Activated naive CD4-positive, alpha-beta T cell treated with anti-CD3 and anti-CD28 coated beads for 36 hours (primary cell): ENCODE measurements at regions of chr1 and their contacts with region 1.

Region 1: GRCh38 chr1:12472798-12473551 is 145.0 kb downstream of the DHRS3 start:
- DNase-seq: peak; percentile 95
- H3K4me3 Mint-ChIP-seq: peak overlapping the region; percentile 56
- H3K27ac Mint-ChIP-seq: peak overlapping the region; percentile 98
- H3K4me1 Mint-ChIP-seq: peaks cover 89% of the 10 kb centered on the region
- H3K27me3 Mint-ChIP-seq: no peaks in the 10 kb centered on the region

Region 2: DNA sequence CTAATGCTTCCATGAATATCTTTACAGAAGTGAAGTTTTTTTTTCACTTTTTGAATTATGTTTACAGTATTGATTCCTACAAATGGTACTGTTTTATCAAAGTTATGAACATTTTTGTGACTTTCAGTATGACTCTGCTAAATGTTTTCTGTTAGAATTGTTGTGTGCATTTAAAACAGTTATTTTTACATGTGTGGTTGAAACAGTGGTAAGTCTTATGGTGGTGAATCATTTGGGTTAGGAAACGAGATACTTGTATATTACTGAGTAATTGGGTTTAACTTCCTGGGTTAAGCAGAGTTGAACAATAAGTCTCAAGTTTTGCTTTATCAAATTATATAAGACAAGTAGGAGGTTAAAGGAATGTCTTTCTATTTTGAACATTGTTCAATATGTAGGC is 176.4 kb before region 1 on chr1:
- CTCF ChIA-PET with region 1: no interaction called
- intact Hi-C with region 1: loop called (anchors 2 kb)
- DNase-seq: no peak
- H3K4me3 Mint-ChIP-seq: no peak overlapping the region
- H3K27ac Mint-ChIP-seq: peak overlapping the region; percentile 51
- H3K4me1 Mint-ChIP-seq: peaks cover 30% of the 10 kb centered on the region
- H3K27me3 Mint-ChIP-seq: no peaks in the 10 kb centered on the region

Region 3: GRCh38 chr1:12344596-12345349 is 128.2 kb before region 1 on chr1:
- CTCF ChIA-PET with region 1: no interaction called
- intact Hi-C with region 1: loop called (anchors 1 kb)
- DNase-seq: peak; percentile 59
- H3K4me3 Mint-ChIP-seq: peak overlapping the region; percentile 51
- H3K27ac Mint-ChIP-seq: peak overlapping the region; percentile 82
- H3K4me1 Mint-ChIP-seq: peaks cover 61% of the 10 kb centered on the region
- H3K27me3 Mint-ChIP-seq: no peaks in the 10 kb centered on the region

Region 4: GRCh38 chr1:12407050-12407961 is 65.7 kb before region 1 on chr1:
- CTCF ChIA-PET with region 1: no interaction called
- intact Hi-C with region 1: loop called (anchors 2 kb)
- DNase-seq: peak; percentile 46
- H3K4me3 Mint-ChIP-seq: no peak overlapping the region
- H3K27ac Mint-ChIP-seq: no peak overlapping the region
- H3K4me1 Mint-ChIP-seq: peaks cover 38% of the 10 kb centered on the region
- H3K27me3 Mint-ChIP-seq: no peaks in the 10 kb centered on the region

Region 5: GRCh38 chr1:12415038-12415466 is 57.9 kb before region 1 on chr1:
- CTCF ChIA-PET with region 1: no interaction called
- intact Hi-C with region 1: loop called (anchors 2 kb)
- DNase-seq: no peak
- H3K4me3 Mint-ChIP-seq: no peak overlapping the region
- H3K27ac Mint-ChIP-seq: peak overlapping the region; percentile 26
- H3K4me1 Mint-ChIP-seq: peaks cover 35% of the 10 kb centered on the region
- H3K27me3 Mint-ChIP-seq: no peaks in the 10 kb centered on the region

Region 6: GRCh38 chr1:12511516-12512468 is 38.8 kb after region 1 on chr1:
- CTCF ChIA-PET with region 1: interaction called, 6 read pairs
- intact Hi-C with region 1: loop called (anchors 1 kb)
- DNase-seq: no peak
- H3K4me3 Mint-ChIP-seq: peak overlapping the region; percentile 80
- H3K27ac Mint-ChIP-seq: peak overlapping the region; percentile 97
- H3K4me1 Mint-ChIP-seq: peaks cover 61% of the 10 kb centered on the region
- H3K27me3 Mint-ChIP-seq: no peaks in the 10 kb centered on the region

Region 7: DNA sequence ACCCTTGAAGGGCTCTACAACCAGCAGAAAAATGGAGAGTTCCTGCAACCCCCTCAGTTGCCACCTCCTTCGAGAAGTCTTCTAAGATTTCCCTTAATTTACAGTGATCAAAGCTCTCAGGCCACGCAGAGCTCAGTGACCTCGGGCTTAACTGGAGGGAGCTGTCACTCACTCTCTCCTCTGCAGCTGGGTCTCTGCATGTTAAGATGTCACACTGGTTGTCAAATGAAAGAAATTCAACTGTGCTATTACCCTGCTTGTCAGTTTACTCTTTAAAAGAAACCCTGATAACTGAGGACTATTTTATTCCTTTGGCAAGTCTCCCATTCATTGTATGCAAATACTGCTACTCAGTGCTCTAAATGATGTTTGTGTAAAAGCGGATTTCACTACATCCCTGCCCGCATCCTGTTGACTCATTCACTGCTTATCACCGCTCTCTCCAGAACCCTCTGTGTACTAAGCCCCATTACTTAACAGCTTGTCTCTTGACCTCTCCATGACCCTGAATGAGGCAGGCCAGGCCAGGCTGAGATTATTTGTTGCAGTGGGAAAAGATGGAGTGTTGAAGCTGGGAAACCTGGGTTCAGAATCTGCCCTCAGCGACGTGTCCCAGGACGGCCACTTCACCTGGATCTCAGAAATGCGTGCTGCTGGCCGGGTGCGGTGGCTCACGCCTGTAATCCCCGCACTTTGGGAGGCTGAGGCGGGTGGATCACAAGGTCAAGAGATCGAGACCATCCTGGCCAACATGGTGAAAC is 131.3 kb after region 1 on chr1:
- CTCF ChIA-PET with region 1: interaction called, 3 read pairs
- intact Hi-C with region 1: loop called (anchors 1 kb)
- DNase-seq: peak; percentile 90
- H3K4me3 Mint-ChIP-seq: peak overlapping the region; percentile 10
- H3K27ac Mint-ChIP-seq: peak overlapping the region; percentile 79
- H3K4me1 Mint-ChIP-seq: peaks cover 71% of the 10 kb centered on the region
- H3K27me3 Mint-ChIP-seq: no peaks in the 10 kb centered on the region